ENCODE measurements at regions of chr2 and their contacts with region 1.

Region 1: DNA sequence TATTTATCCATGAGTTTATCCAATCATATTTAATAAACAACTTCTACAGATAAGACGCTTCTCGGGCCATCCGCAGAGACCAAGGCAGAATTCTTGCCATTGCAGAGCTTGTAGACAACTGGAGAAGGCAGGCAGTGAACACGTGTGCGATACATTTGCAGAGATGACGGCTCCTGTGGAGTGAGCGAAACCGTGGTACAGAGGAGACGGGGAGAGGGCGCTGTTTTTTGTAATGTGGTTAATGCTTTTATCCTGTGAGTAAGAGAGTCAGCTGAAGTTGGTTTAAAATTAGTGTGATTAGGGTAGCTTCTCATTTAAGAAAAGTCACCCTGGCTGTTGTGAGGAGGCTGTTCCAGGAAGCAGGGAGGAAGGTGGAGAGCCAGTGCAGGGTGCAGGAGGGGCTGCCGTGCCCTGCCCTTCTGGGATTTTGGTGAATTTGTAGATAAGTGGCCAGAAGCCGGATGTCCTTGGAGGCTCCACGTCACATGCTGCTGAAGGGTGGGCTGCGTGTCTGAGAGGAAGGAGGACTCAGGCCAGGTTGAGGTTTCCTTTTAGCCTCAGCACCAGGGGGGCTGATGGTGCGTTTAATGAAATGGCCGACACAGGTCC is 151.4 kb downstream of the SNTG2 start:
- DNase-seq: no peak
- H3K4me3 ChIP-seq: no peak overlapping the region
- H3K27ac ChIP-seq: no peak overlapping the region
- H3K4me1 ChIP-seq: no peaks in the 10 kb centered on the region
- H3K27me3 ChIP-seq: no peaks in the 10 kb centered on the region
- CTCF ChIP-seq: no peak

Region 2: GRCh38 chr2:1147873-1148612 is 46.0 kb after region 1 on chr2:
- CTCF ChIA-PET with region 1: no interaction called
- dilution Hi-C with region 1: no loop called
- in situ Hi-C with region 1: no loop called
- intact Hi-C with region 1: no loop called
- DNase-seq: no peak
- H3K4me3 ChIP-seq: no peak overlapping the region
- H3K27ac ChIP-seq: no peak overlapping the region
- H3K4me1 ChIP-seq: no peaks in the 10 kb centered on the region
- H3K27me3 ChIP-seq: no peaks in the 10 kb centered on the region
- CTCF ChIP-seq: no peak

Region 3: DNA sequence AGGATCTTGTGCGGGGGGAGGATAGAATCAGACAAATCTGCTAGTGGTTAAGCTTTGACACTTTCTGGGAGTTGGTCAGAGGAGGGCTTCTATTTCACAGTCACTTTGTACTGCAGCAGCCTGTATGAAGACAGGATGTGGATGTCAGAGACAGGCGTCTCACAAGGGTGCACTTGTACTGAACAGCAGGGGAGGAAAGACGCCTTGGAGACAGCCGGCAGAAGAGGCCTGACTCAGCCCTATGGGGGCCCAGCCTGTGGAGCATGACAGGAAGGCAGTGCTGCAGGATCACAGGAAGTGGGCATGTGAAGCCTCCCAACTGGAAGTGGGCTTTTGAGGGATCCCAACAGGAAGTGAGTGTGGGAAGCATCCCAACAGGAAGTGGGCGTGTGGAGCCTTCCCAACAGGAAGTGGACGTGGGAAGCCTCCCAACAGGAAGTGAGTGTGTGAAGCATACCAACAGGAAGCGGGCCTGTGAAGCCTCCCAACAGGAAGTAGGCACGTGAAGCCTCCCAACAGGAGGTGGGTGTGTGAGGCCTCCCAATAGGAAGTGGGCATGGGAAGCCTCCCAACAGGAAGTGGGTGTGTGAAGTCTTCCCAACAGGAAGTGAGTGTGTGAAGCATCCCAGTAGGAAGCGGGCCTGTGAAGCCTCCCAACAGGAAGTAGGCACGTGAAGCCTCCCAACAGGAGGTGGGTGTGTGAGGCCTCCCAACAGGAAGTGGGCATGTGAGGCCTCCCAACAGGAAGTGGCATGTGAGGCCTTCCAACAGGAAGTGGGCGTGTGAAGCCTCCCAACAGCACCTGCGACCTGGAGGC is 60.9 kb after region 1 on chr2:
- CTCF ChIA-PET with region 1: no interaction called
- dilution Hi-C with region 1: loop called (anchors 5 kb)
- in situ Hi-C with region 1: no loop called
- intact Hi-C with region 1: no loop called
- DNase-seq: no peak
- H3K4me3 ChIP-seq: no peak overlapping the region
- H3K27ac ChIP-seq: no peak overlapping the region
- H3K4me1 ChIP-seq: no peaks in the 10 kb centered on the region
- H3K27me3 ChIP-seq: no peaks in the 10 kb centered on the region
- CTCF ChIP-seq: no peak